ENCODE measurements at regions of chr17 and their contacts with region 1.

Region 1: GRCh38 chr17:68172461-68172954 is 75.3 kb upstream of the AMZ2 start:
- DNase-seq: peak; percentile 62 to 87 (median 72)
- ATAC-seq: peak; percentile 82
- H3K4me3 ChIP-seq: no peak overlapping the region
- H3K4me3 Mint-ChIP-seq: no peak overlapping the region
- H3K27ac ChIP-seq: no peak overlapping the region
- H3K27ac Mint-ChIP-seq: no peak overlapping the region
- H3K4me1 ChIP-seq: peaks cover 6% of the 10 kb centered on the region
- H3K4me1 Mint-ChIP-seq: peaks cover 17% of the 10 kb centered on the region
- H3K27me3 ChIP-seq: no peaks in the 10 kb centered on the region
- H3K27me3 Mint-ChIP-seq: no peaks in the 10 kb centered on the region
- CTCF ChIP-seq: peak; percentile 99

Region 2: DNA sequence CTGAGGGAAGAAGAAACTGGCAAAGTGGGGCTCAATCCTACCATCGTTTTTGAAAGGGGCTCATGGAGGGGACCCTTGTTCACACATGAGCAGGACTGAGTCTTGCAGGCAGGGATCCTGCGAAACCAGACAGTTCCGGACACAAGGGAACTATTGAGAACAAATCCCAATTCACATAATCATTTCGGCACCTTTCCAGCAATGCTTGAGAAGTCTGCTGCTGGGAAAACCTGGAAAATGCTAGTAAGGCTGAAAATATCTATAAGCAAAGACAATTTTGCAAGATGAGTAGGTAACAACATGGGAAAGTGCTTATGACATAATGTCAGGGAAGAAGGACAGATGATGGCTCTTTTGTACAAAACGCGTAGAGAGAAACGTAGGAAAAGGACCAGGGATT is 399.3 kb before region 1 on chr17:
- CTCF ChIA-PET with region 1: no interaction called
- POLR2A ChIA-PET with region 1: no interaction called
- intact Hi-C with region 1: no loop called
- DNase-seq: no peak
- ATAC-seq: no peak
- H3K4me3 ChIP-seq: no peak overlapping the region
- H3K4me3 Mint-ChIP-seq: no peak overlapping the region
- H3K27ac ChIP-seq: no peak overlapping the region
- H3K27ac Mint-ChIP-seq: no peak overlapping the region
- H3K4me1 ChIP-seq: no peaks in the 10 kb centered on the region
- H3K4me1 Mint-ChIP-seq: no peaks in the 10 kb centered on the region
- H3K27me3 ChIP-seq: no peaks in the 10 kb centered on the region
- H3K27me3 Mint-ChIP-seq: no peaks in the 10 kb centered on the region
- CTCF ChIP-seq: no peak

Region 3: DNA sequence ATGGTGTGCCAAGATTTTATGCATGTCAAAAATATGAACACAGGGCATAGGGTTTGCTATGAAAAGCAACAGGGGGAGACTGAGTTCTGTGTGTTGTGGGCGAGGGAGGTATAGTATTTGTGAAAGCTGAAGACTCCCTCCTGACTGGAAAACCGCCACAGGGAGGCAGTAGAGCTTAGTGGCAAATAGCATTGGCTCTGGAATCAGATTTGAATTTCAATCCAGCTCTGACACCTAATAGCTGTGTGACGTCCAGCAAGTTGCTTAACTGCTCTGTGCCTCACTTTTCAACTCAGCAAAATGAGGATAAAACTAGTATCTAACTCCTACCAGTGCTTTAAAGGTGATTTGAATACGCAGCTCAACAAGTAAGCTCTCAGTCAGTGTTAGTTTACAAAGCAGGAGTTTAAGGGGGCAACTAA is 115.0 kb before region 1 on chr17:
- CTCF ChIA-PET with region 1: no interaction called
- POLR2A ChIA-PET with region 1: no interaction called
- intact Hi-C with region 1: loop called in 1 of 2 experiments (anchors 10 kb)
- DNase-seq: peak; percentile 6 to 64 (median 44)
- ATAC-seq: peak; percentile 89
- H3K4me3 ChIP-seq: no peak overlapping the region
- H3K4me3 Mint-ChIP-seq: no peak overlapping the region
- H3K27ac ChIP-seq: no peak overlapping the region
- H3K27ac Mint-ChIP-seq: no peak overlapping the region
- H3K4me1 ChIP-seq: peaks cover 26% of the 10 kb centered on the region
- H3K4me1 Mint-ChIP-seq: peaks cover 7% of the 10 kb centered on the region
- H3K27me3 ChIP-seq: no peaks in the 10 kb centered on the region
- H3K27me3 Mint-ChIP-seq: no peaks in the 10 kb centered on the region
- CTCF ChIP-seq: peak; percentile 61

Region 4: DNA sequence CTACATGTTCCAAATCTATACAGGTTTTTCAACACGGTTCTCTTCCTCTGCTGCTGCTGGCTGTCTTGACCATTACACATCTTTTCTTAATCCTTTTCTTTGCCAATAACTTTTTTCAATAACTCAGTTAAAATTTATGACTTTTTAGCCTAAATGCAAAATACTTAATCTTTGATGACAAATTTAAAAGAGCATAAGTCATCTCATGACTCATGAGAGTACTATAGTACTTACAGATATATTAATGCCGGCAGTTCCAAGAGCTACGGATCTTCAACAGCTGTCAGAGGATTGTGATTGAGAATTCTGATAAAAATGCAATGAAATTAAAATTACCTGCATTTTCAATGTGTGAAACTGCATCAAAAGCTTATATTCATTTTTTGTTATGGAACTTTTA is 31.5 kb before region 1 on chr17:
- CTCF ChIA-PET with region 1: no interaction called
- POLR2A ChIA-PET with region 1: no interaction called
- intact Hi-C with region 1: no loop called
- DNase-seq: no peak
- ATAC-seq: no peak
- H3K4me3 ChIP-seq: no peak overlapping the region
- H3K4me3 Mint-ChIP-seq: no peak overlapping the region
- H3K27ac ChIP-seq: no peak overlapping the region
- H3K27ac Mint-ChIP-seq: no peak overlapping the region
- H3K4me1 ChIP-seq: no peaks in the 10 kb centered on the region
- H3K4me1 Mint-ChIP-seq: peaks cover 1% of the 10 kb centered on the region
- H3K27me3 ChIP-seq: no peaks in the 10 kb centered on the region
- H3K27me3 Mint-ChIP-seq: no peaks in the 10 kb centered on the region
- CTCF ChIP-seq: no peak

Region 5: GRCh38 chr17:68247445-68248198 is 75.1 kb after region 1 on chr17 and contains the start of gene AMZ2:
- CTCF ChIA-PET with region 1: interaction called, 5 read pairs
- POLR2A ChIA-PET with region 1: interaction called, 11 read pairs
- intact Hi-C with region 1: loop called in 1 of 2 experiments (anchors 5 kb)
- DNase-seq: peak; percentile 92 to 99 (median 96)
- ATAC-seq: peak; percentile 89
- H3K4me3 ChIP-seq: peak within 1 kb of the TSS; percentile 92
- H3K4me3 Mint-ChIP-seq: peak within 1 kb of the TSS; percentile 94
- H3K27ac ChIP-seq: peak within 1 kb of the TSS; percentile 97
- H3K27ac Mint-ChIP-seq: peak within 1 kb of the TSS; percentile 93
- H3K4me1 ChIP-seq: peaks cover 37% of the 10 kb centered on the region
- H3K4me1 Mint-ChIP-seq: peaks cover 52% of the 10 kb centered on the region
- H3K27me3 ChIP-seq: no peaks in the 10 kb centered on the region
- H3K27me3 Mint-ChIP-seq: no peaks in the 10 kb centered on the region
- CTCF ChIP-seq: no peak
- total RNA-seq, gene AMZ2: 63.0 to 64.9 TPM

Region 6: DNA sequence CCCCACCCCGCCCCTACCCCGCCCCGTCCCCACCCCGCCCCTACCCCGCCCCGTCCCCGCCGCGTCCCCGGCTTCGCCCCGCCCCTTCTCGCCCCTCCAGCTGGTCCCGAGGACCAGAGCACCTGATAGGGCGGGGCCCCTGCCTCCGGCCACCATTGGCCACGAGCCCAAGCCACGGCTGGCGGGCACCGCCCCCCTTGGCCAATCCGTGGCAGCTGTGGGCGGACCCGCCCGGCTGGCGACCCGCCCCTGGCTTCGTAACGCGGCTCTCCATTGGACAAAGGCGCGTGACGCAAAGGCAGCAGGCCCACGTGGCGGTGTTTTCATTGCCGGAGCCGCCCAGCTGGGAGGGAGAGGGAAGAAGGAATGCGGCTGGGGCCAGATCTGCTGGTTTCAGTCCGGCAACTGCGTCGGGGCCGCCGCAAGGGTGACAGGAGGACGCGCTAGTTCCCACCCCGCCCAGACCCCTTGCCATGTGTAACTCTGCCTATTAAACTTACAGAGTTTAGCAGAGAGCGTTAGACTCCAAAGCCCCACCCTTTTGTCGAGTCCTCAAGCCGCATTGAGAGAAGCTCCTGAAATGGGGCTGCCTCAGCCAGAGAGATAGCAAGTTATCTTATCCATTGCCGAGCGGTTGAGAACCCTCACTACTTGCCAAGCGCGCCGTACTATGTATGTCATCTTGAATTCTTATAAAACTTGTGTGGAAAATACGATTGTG is 285.2 kb after region 1 on chr17:
- CTCF ChIA-PET with region 1: no interaction called
- POLR2A ChIA-PET with region 1: interaction called, 6 read pairs
- intact Hi-C with region 1: loop called in 1 of 2 experiments (anchors 2 kb)
- DNase-seq: peak; percentile 95 to 99 (median 98)
- ATAC-seq: peak; percentile 93
- H3K4me3 ChIP-seq: peak overlapping the region; percentile 77
- H3K4me3 Mint-ChIP-seq: peak overlapping the region; percentile 82
- H3K27ac ChIP-seq: peak overlapping the region; percentile 43 to 59
- H3K27ac Mint-ChIP-seq: peak overlapping the region; percentile 81
- H3K4me1 ChIP-seq: peaks cover 50% of the 10 kb centered on the region
- H3K4me1 Mint-ChIP-seq: peaks cover 51% of the 10 kb centered on the region
- H3K27me3 ChIP-seq: no peaks in the 10 kb centered on the region
- H3K27me3 Mint-ChIP-seq: no peaks in the 10 kb centered on the region
- CTCF ChIP-seq: no peak

Measured in CD4-positive, alpha-beta T cell (primary cell).